CD14-positive monocyte (primary cell): ENCODE measurements at regions of chr3 and their contacts with region 1.

Region 1: DNA sequence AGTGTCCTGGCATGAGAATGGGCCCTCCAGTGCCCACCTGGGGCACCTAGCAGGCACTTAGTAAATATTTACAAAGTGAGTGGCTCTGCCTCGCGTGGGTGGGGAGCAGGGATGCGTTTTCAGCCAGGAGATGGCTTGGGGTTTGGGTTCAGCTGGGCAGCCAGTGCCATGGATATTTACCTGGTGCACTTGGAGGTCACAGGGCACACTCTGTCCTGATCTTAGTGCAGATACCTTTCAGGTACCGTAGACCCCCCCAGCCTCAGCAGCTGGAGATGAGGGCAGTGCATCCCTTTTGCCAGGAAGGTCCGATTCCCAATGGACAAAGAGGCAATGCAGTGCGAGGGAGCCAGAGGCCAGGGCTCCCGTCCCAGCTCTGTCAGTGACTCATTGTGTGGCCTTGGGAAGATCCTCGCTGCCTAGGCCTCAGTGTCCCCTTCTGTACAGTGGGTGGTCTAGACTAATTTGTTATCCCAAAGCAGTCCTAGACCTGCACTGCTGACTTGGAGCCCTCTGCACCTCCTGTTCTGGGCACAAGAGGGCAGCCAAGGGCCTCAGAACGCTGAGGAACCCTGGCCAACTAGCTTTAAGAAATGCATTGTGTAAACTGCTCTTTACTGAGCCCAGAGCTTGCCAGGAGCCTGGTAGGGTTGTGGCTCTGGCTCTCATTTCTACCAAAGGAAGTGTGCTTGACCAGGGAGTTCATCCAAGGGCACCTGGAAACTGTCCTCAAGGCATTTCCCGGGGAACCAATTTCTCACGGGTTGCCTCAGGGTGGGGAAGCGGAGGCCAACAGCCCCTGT is 16.0 kb downstream of the HDAC11 start:
- DNase-seq: peak; percentile 47 to 72 (median 58)
- H3K4me3 ChIP-seq: no peak overlapping the region
- H3K4me3 Mint-ChIP-seq: no peak overlapping the region
- H3K27ac ChIP-seq: no peak overlapping the region
- H3K27ac Mint-ChIP-seq: peak overlapping the region in 4 of 7 donors; percentile 4 to 48 (median 24)
- H3K4me1 ChIP-seq: peaks cover 0 to 9% of the 10 kb centered on the region in 2 donors
- H3K4me1 Mint-ChIP-seq: peaks cover 8% of the 10 kb centered on the region
- H3K27me3 ChIP-seq: no peaks in the 10 kb centered on the region
- H3K27me3 Mint-ChIP-seq: peaks cover 0 to 1% (median 0%) of the 10 kb centered on the region in 3 donors
- CTCF ChIP-seq: peak; percentile 93

Region 2: DNA sequence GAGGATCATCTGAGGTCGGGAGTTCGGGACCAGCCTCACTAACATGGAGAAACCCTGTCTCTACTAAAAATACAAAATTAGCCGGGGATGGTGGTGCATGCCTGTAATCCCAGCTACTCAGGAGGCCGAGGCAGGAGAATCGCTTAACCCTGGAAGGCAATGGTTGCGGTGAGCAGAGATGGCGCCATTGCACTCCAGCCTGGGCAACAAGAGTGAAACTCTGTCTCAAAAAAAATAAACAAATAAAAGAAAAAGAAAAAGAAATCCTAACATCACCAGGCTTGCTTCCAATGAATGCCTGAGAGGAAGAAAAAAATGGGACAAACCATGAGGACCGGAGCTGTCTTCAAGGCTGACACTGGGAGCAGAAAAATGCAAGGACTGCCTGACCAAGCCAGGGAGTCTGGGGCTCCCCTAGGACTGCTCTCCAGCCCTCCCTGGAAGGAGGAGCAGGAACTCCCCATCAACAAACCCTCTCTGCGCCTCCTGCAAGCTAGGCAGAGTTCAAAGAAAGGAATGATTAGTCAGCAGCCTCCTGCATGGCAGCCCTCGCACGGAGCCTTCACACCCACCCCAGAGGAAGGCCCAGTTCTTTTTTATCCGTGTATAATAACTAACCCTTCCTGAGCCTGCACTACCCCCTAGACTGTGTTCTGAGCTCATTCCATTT is 131.4 kb before region 1 on chr3:
- intact Hi-C with region 1: no loop called
- DNase-seq: no peak
- H3K4me3 ChIP-seq: no peak overlapping the region
- H3K4me3 Mint-ChIP-seq: no peak overlapping the region
- H3K27ac ChIP-seq: no peak overlapping the region
- H3K27ac Mint-ChIP-seq: peak overlapping the region in 3 of 7 donors; percentile 21 to 59 (median 58)
- H3K4me1 ChIP-seq: no peaks in the 10 kb centered on the region
- H3K4me1 Mint-ChIP-seq: no peaks in the 10 kb centered on the region
- H3K27me3 ChIP-seq: no peaks in the 10 kb centered on the region
- H3K27me3 Mint-ChIP-seq: peaks cover 0 to 3% (median 0%) of the 10 kb centered on the region in 3 donors
- CTCF ChIP-seq: no peak

Region 3: DNA sequence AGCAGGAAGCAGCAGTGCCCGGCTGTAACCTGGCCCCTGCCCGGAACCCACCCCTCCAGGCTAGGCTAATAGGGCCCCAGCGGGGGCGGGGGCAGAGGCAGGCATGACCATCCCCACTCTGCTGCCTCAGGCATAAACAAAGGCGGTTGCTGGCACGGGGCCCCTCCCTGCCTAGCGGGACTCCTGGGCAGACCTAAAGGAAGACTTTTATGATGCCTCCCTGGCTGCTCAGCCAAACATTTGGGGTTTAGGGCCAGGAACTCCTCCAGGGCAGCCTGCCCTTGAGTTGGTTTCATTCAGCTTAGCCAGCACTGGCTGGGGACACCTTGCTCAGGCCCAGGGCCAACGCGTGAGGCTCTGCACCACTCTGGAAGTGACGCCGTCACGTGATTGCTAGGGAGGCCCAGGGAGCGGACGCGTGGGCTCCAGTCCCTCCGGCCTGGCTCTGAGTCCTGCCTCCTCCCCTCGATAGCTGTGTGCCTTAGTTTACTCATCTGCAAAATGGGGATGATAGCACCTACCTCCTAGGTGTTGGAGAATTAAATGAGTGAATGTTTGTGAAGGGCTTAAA is 11.7 kb after region 1 on chr3:
- intact Hi-C with region 1: no loop called
- DNase-seq: no peak
- H3K4me3 ChIP-seq: no peak overlapping the region
- H3K4me3 Mint-ChIP-seq: no peak overlapping the region
- H3K27ac ChIP-seq: no peak overlapping the region
- H3K27ac Mint-ChIP-seq: no peak overlapping the region
- H3K4me1 ChIP-seq: no peaks in the 10 kb centered on the region
- H3K4me1 Mint-ChIP-seq: no peaks in the 10 kb centered on the region
- H3K27me3 ChIP-seq: no peaks in the 10 kb centered on the region
- H3K27me3 Mint-ChIP-seq: peaks cover 1 to 5% (median 2%) of the 10 kb centered on the region in 3 donors
- CTCF ChIP-seq: no peak

Region 4: DNA sequence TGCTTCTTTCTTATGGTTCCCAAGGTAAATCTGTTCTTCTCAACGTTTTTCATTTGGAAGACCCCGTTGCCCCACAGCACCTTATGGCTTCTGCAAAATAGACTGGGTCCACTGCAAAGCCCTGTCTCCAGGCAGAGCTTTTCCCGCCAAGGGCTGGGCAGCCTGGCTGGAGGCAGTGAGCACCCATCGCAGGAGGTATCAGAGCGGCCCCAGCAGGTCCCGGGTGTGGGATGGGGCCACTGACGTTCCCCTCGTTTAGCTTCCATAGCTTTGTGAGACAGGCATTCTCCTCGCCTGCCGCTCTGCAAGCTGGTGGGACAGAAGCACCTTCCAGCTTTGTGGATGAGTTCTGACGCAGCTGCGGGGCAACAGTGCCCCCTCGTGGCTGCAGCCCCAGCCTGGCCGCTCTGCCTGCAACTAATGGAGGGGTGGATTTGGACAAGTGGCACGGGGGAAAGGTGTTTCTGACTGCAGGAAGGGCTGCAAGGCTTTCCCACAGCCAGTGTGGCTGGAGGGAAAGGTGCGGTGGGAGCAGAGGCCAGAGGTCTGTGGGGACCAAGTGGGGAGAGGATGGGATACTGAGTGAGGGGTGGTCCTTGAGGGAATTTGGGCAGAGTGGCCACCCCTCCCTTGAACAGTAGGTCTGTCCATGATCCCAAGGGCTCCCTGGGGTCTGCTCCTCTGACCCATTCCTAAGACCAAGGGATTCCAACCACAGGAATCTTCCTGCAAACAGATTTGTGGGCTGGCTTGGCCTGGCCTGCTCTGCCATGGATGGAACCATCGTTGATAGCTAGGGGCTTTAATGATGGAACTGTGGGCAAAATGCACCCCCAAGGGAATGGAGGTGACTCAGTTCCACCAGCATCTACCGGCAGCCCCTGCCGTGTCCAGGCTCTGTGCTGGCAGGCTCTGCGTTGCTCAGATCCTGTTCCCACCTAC is 152.2 kb after region 1 on chr3:
- intact Hi-C with region 1: loop called (anchors 1 to 2 kb)
- DNase-seq: peak; percentile 38 to 55 (median 51)
- H3K4me3 ChIP-seq: peak overlapping the region in 1 of 3 experiments; percentile 5
- H3K4me3 Mint-ChIP-seq: peak overlapping the region in 1 of 2 donors; percentile 35
- H3K27ac ChIP-seq: no peak overlapping the region
- H3K27ac Mint-ChIP-seq: peak overlapping the region in 1 of 7 donors; percentile 64
- H3K4me1 ChIP-seq: peaks cover 18 to 21% of the 10 kb centered on the region in 2 donors
- H3K4me1 Mint-ChIP-seq: peaks cover 23% of the 10 kb centered on the region
- H3K27me3 ChIP-seq: no peaks in the 10 kb centered on the region
- H3K27me3 Mint-ChIP-seq: peaks cover 15 to 33% (median 23%) of the 10 kb centered on the region in 3 donors
- CTCF ChIP-seq: peak; percentile 90